Activated CD8-positive, alpha-beta T cell treated with anti-CD3 and anti-CD28 coated beads, Interleukin-2, amount 10 ng/mL, durations not matched to agents 7 days and 5 days (primary cell): ENCODE measurements at regions of chr3 and their contacts with region 1.

Region 1: GRCh38 chr3:50568947-50569749 is at the start of gene HEMK1:
- DNase-seq: peak; percentile 98
- ATAC-seq: peak; percentile 46
- H3K4me3 Mint-ChIP-seq: peak within 1 kb of the TSS; percentile 95
- H3K27ac Mint-ChIP-seq: peak within 1 kb of the TSS; percentile 97
- H3K4me1 Mint-ChIP-seq: peaks cover 79% of the 10 kb centered on the region
- H3K27me3 Mint-ChIP-seq: peaks cover 2% of the 10 kb centered on the region
- total RNA-seq, gene HEMK1: 83.3 to 86.0 TPM

Region 2: GRCh38 chr3:50316657-50317242 is 252.4 kb before region 1 on chr3:
- CTCF ChIA-PET with region 1: no interaction called
- POLR2A ChIA-PET with region 1: no interaction called
- DNase-seq: peak; percentile 80
- ATAC-seq: peak; percentile 63
- H3K4me3 Mint-ChIP-seq: peak overlapping the region; percentile 59
- H3K27ac Mint-ChIP-seq: peak overlapping the region; percentile 88
- H3K4me1 Mint-ChIP-seq: peaks cover 33% of the 10 kb centered on the region
- H3K27me3 Mint-ChIP-seq: no peaks in the 10 kb centered on the region

Region 3: GRCh38 chr3:50525987-50526386 is 43.2 kb before region 1 on chr3:
- CTCF ChIA-PET with region 1: no interaction called
- POLR2A ChIA-PET with region 1: no interaction called
- DNase-seq: peak; percentile 84
- ATAC-seq: peak; percentile 91
- H3K4me3 Mint-ChIP-seq: no peak overlapping the region
- H3K27ac Mint-ChIP-seq: no peak overlapping the region
- H3K4me1 Mint-ChIP-seq: peaks cover 7% of the 10 kb centered on the region
- H3K27me3 Mint-ChIP-seq: peaks cover 18% of the 10 kb centered on the region

Region 4: DNA sequence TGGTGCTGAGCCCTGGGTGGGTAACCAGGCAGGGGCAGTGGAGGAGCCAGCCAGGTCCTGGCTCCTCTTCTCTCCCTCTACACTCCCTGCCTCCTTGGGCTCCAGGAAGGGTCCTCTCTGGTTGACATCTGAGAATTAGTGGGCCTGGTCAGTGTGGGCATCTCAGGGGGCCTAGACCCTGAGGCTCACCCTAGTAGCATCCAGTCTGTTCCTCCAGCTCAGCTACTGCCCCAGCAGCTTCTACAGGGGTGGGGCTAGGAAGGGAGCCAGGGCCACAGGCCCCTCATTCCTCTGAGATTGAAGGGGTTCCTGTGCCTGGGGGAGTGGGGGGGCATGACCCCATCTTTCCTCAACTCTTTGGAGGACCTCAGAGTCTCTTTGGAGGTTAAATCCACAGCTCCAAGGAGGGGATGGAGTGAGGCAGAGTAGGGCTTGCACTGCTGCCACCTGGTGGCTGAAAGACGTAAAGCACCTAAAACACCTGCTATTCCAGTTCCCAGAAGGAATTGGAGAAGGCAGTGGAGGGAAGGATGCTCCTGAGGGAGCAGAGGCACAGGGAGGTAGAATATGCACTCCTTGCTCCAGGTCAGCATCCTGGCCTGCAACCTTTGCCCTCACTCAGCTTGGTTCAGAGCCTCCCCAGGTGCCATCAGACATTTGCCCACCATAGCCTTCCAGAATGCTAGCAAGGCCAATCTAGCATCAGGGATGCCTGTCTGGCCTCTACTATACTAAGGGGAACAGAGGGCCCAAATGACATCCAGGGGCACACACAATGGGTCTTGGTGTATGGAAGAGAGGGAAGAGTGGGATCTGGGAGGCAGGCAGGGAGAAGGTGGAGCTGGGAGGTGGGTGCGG is 26.7 kb before region 1 on chr3:
- CTCF ChIA-PET with region 1: interaction called, 21 read pairs
- POLR2A ChIA-PET with region 1: no interaction called
- DNase-seq: peak; percentile 71
- ATAC-seq: peak; percentile 73
- H3K4me3 Mint-ChIP-seq: no peak overlapping the region
- H3K27ac Mint-ChIP-seq: no peak overlapping the region
- H3K4me1 Mint-ChIP-seq: no peaks in the 10 kb centered on the region
- H3K27me3 Mint-ChIP-seq: peaks cover 30% of the 10 kb centered on the region

Region 5: GRCh38 chr3:50587806-50588758 is 18.9 kb after region 1 on chr3:
- CTCF ChIA-PET with region 1: interaction called, 387 read pairs
- POLR2A ChIA-PET with region 1: interaction called, 612 read pairs
- DNase-seq: peak; percentile 78
- ATAC-seq: peak; percentile 41
- H3K4me3 Mint-ChIP-seq: peak overlapping the region; percentile 62
- H3K27ac Mint-ChIP-seq: peak overlapping the region; percentile 98
- H3K4me1 Mint-ChIP-seq: peaks cover 97% of the 10 kb centered on the region
- H3K27me3 Mint-ChIP-seq: no peaks in the 10 kb centered on the region

Region 6: DNA sequence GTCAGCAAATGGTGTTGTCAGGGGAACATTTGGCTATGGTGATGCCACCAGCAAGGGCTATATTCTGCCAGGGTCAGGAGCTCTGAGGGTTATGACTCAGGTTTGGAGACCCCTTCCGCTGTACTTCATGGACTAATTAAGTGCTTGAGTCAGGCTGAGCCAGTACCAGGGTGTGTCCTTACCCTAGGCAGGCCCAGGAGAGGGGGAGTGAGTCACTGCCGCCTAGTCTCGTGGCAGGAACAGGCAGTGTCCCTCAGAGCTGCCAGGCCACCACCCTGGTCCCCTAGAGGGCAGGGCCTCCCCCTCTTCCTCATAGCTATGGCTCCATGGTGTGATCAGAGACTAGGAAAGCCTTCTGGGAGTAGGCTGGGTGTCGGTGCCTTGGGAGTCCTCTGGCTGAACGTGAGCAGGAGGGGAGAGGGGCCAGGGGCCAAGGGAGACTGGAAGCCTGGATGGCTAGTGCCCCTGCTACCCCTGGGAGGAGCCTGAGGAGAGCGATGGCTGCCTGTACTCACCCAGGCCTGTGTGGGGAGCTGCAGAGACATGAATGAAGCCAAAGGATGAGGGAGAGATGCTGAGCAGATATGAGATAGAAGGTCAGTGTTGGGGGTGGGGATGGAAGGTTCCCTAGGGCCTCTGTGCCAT is 58.4 kb after region 1 on chr3:
- CTCF ChIA-PET with region 1: interaction called, 1,321 read pairs
- POLR2A ChIA-PET with region 1: interaction called, 10 read pairs
- DNase-seq: peak; percentile 36
- ATAC-seq: no peak
- H3K4me3 Mint-ChIP-seq: no peak overlapping the region
- H3K27ac Mint-ChIP-seq: peak overlapping the region; percentile 55
- H3K4me1 Mint-ChIP-seq: peaks cover 99% of the 10 kb centered on the region
- H3K27me3 Mint-ChIP-seq: no peaks in the 10 kb centered on the region

Region 7: DNA sequence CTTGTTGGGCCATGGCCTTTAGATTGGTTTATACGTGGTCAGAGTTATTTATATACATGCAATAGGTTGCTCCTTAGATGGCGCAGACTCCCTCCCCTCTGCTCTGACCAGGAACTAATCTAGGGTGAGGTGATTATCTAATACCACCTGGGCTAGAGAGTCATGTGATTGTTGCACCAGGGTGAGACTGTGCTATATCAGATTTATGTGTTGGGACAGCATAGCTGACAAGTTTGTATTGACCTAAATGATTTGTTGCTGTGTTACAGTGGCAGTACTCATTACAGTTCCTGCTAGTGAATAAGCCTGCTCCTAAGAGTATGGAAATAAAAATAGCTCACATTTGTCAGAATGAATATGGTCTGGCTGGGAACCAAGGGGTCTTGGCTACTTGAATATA is 1217.1 kb after region 1 on chr3:
- CTCF ChIA-PET with region 1: no interaction called
- POLR2A ChIA-PET with region 1: no interaction called
- DNase-seq: no peak
- ATAC-seq: no peak
- H3K4me3 Mint-ChIP-seq: no peak overlapping the region
- H3K27ac Mint-ChIP-seq: no peak overlapping the region
- H3K4me1 Mint-ChIP-seq: peaks cover 28% of the 10 kb centered on the region
- H3K27me3 Mint-ChIP-seq: peaks cover 29% of the 10 kb centered on the region